ENCODE measurements at regions of chr2 and their contacts with region 1.

Region 1: GRCh38 chr2:138787053-138787666 is 7.0 kb upstream of the NXPH2 start:
- DNase-seq: peak; percentile 51
- H3K4me3 Mint-ChIP-seq: no peak overlapping the region
- H3K27ac Mint-ChIP-seq: no peak overlapping the region
- H3K4me1 Mint-ChIP-seq: no peaks in the 10 kb centered on the region
- H3K27me3 Mint-ChIP-seq: peaks cover 42% of the 10 kb centered on the region
- CTCF ChIP-seq: peak; percentile 71

Region 2: DNA sequence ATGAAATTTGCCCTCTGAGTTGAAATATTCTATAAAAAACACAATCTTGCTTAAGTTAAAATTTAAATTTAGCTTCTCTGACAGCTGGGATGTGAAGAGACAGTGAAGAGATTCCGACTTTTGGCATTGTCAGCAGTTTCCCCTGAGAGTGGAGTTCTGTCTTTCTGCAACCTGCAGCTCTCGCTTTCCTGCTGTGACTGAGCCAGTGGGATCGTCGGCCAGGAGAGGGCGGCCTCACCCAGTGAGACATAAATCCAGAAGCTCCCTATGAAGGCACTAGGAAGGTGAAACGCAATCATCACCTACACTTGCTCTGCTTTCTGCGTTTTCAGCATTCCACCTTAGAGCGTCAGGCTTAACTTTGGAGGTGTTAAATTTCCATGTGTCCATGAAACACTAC is 898.3 kb before region 1 on chr2:
- CTCF ChIA-PET with region 1: interaction called, 13 read pairs
- POLR2A ChIA-PET with region 1: no interaction called
- intact Hi-C with region 1: no loop called
- DNase-seq: peak; percentile 53
- H3K4me3 Mint-ChIP-seq: no peak overlapping the region
- H3K27ac Mint-ChIP-seq: no peak overlapping the region
- H3K4me1 Mint-ChIP-seq: peaks cover 10% of the 10 kb centered on the region
- H3K27me3 Mint-ChIP-seq: no peaks in the 10 kb centered on the region
- CTCF ChIP-seq: peak; percentile 55

Region 3: DNA sequence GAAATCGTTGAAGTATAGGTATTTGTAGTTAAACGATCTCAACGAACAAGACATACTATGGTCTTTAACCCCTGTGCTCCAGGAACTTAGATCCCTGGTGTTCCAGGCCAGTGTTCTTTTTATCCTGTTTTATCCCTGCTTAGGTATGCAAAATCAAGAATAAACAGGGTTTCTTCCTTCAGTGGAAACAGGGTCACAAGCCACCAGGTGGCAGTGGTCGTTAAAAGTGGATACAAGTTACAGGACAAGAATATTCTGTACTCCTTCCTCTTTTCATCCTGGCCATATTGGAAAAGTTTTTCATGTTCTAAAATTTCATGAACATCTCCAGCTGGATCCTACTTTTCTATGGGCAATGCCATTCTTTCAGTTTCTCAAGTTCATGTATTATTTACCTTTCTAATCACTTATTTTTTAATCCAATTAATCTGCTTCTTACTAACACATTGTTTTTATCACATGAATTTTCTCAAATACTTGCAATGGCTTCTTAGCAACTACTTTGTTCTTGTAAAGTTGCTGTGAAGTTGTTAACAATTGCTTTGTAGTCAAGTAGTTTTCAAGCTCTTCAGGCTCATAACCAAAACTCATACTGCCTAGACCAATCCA is 839.3 kb before region 1 on chr2:
- CTCF ChIA-PET with region 1: interaction called, 12 read pairs
- POLR2A ChIA-PET with region 1: interaction called, 3 read pairs
- intact Hi-C with region 1: no loop called
- DNase-seq: peak; percentile 72
- H3K4me3 Mint-ChIP-seq: no peak overlapping the region
- H3K27ac Mint-ChIP-seq: no peak overlapping the region
- H3K4me1 Mint-ChIP-seq: peaks cover 11% of the 10 kb centered on the region
- H3K27me3 Mint-ChIP-seq: no peaks in the 10 kb centered on the region
- CTCF ChIP-seq: peak; percentile 57

Region 4: GRCh38 chr2:138373993-138374408 is 413.2 kb before region 1 on chr2:
- CTCF ChIA-PET with region 1: interaction called, 31 read pairs
- POLR2A ChIA-PET with region 1: no interaction called
- intact Hi-C with region 1: loop called (anchors 2 kb)
- DNase-seq: peak; percentile 63
- H3K4me3 Mint-ChIP-seq: no peak overlapping the region
- H3K27ac Mint-ChIP-seq: no peak overlapping the region
- H3K4me1 Mint-ChIP-seq: no peaks in the 10 kb centered on the region
- H3K27me3 Mint-ChIP-seq: no peaks in the 10 kb centered on the region
- CTCF ChIP-seq: peak; percentile 59

Region 5: DNA sequence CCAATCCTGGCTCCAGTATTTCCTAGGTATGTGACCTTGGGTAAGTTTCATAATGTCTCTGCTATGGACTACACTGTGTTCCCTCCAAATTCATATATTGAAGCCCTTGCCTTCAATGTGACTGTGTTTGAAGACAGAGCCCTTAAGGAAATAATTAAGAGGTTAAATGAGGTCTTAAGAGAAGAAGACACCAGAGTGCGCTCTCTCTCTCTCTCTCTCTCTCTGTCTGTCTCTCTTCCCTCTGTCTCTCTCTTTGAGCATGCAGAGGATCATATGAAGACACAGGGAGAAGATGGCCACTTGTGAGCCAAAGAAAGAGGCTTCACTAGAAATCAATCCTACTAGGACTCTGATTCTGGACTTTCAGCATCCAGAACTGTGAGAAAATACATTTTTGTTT is 59.2 kb before region 1 on chr2:
- CTCF ChIA-PET with region 1: interaction called, 11 read pairs
- POLR2A ChIA-PET with region 1: no interaction called
- intact Hi-C with region 1: no loop called
- DNase-seq: no peak
- H3K4me3 Mint-ChIP-seq: no peak overlapping the region
- H3K27ac Mint-ChIP-seq: no peak overlapping the region
- H3K4me1 Mint-ChIP-seq: no peaks in the 10 kb centered on the region
- H3K27me3 Mint-ChIP-seq: no peaks in the 10 kb centered on the region
- CTCF ChIP-seq: no peak

Region 6: GRCh38 chr2:138827426-138828054 is 40.4 kb after region 1 on chr2:
- CTCF ChIA-PET with region 1: interaction called, 39 read pairs
- POLR2A ChIA-PET with region 1: no interaction called
- intact Hi-C with region 1: loop called (anchors 1 kb)
- DNase-seq: peak; percentile 80
- H3K4me3 Mint-ChIP-seq: no peak overlapping the region
- H3K27ac Mint-ChIP-seq: no peak overlapping the region
- H3K4me1 Mint-ChIP-seq: no peaks in the 10 kb centered on the region
- H3K27me3 Mint-ChIP-seq: peaks cover 7% of the 10 kb centered on the region
- CTCF ChIP-seq: peak; percentile 49

Region 7: GRCh38 chr2:139457873-139458272 is 670.7 kb after region 1 on chr2:
- CTCF ChIA-PET with region 1: no interaction called
- POLR2A ChIA-PET with region 1: no interaction called
- intact Hi-C with region 1: no loop called
- DNase-seq: no peak
- H3K4me3 Mint-ChIP-seq: no peak overlapping the region
- H3K27ac Mint-ChIP-seq: no peak overlapping the region
- H3K4me1 Mint-ChIP-seq: no peaks in the 10 kb centered on the region
- H3K27me3 Mint-ChIP-seq: no peaks in the 10 kb centered on the region
- CTCF ChIP-seq: no peak